Activated B cell treated with CpG ODN at 0.5 μM for 24 hours (primary cell): ENCODE measurements at regions of chr5 and their contacts with region 1.

Region 1: GRCh38 chr5:64612344-64612961 is 77.8 kb upstream of the SHISAL2B start:
- DNase-seq: no peak
- ATAC-seq: no peak
- H3K4me3 Mint-ChIP-seq: no peak overlapping the region
- H3K27ac Mint-ChIP-seq: no peak overlapping the region
- H3K4me1 Mint-ChIP-seq: no peaks in the 10 kb centered on the region
- H3K27me3 Mint-ChIP-seq: peaks cover 10% of the 10 kb centered on the region
- CTCF ChIP-seq: no peak

Region 2: GRCh38 chr5:64147849-64148441 is 464.5 kb before region 1 on chr5:
- CTCF ChIA-PET with region 1: no interaction called
- POLR2A ChIA-PET with region 1: no interaction called
- intact Hi-C with region 1: loop called (anchors 5 kb)
- DNase-seq: no peak
- ATAC-seq: no peak
- H3K4me3 Mint-ChIP-seq: no peak overlapping the region
- H3K27ac Mint-ChIP-seq: no peak overlapping the region
- H3K4me1 Mint-ChIP-seq: no peaks in the 10 kb centered on the region
- H3K27me3 Mint-ChIP-seq: no peaks in the 10 kb centered on the region
- CTCF ChIP-seq: no peak

Region 3: GRCh38 chr5:64229163-64229774 is 383.2 kb before region 1 on chr5:
- CTCF ChIA-PET with region 1: interaction called, 3 read pairs
- POLR2A ChIA-PET with region 1: no interaction called
- intact Hi-C with region 1: loop called (anchors 2 kb)
- DNase-seq: no peak
- ATAC-seq: no peak
- H3K4me3 Mint-ChIP-seq: no peak overlapping the region
- H3K27ac Mint-ChIP-seq: no peak overlapping the region
- H3K4me1 Mint-ChIP-seq: no peaks in the 10 kb centered on the region
- H3K27me3 Mint-ChIP-seq: no peaks in the 10 kb centered on the region
- CTCF ChIP-seq: no peak